ENCODE measurements at regions of chr7 and their contacts with region 1.

Region 1: DNA sequence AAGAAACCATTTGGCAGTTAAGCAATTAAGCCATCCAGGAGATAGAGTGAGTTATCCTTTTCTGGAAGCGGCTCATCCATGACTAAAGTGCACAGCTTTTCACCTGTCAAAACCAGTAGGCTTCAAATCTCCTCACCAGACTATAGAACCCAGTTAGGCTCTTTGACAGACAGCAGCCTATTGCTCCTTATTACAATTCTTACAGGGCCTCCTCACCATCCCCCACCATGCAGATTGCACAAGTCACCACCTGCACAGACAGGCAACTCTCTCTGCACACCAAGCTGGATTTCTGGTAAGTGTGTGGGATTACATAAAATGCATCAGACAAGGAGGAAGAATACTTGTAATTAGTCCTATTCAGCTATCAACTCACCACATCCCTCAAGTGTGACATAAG is 301.6 kb downstream of the SNX13 start:
- DNase-seq: peak; percentile 78
- H3K4me3 ChIP-seq: no peak overlapping the region
- H3K27ac ChIP-seq: no peak overlapping the region
- H3K4me1 ChIP-seq: peaks cover 11% of the 10 kb centered on the region
- H3K27me3 ChIP-seq: no peaks in the 10 kb centered on the region
- CTCF ChIP-seq: no peak

Region 2: GRCh38 chr7:17304926-17305325 is 333.8 kb before region 1 on chr7:
- CTCF ChIA-PET with region 1: interaction called, 5 read pairs
- dilution Hi-C with region 1: no loop called
- in situ Hi-C with region 1: loop called in 1 of 2 experiments (anchors 10 kb)
- intact Hi-C with region 1: loop called (anchors 2 kb)
- DNase-seq: peak; percentile 91
- H3K4me3 ChIP-seq: peak overlapping the region; percentile 15 to 71 (median 36)
- H3K27ac ChIP-seq: peak overlapping the region; percentile 77
- H3K4me1 ChIP-seq: peaks cover 42% of the 10 kb centered on the region
- H3K27me3 ChIP-seq: no peaks in the 10 kb centered on the region
- CTCF ChIP-seq: no peak

Region 3: DNA sequence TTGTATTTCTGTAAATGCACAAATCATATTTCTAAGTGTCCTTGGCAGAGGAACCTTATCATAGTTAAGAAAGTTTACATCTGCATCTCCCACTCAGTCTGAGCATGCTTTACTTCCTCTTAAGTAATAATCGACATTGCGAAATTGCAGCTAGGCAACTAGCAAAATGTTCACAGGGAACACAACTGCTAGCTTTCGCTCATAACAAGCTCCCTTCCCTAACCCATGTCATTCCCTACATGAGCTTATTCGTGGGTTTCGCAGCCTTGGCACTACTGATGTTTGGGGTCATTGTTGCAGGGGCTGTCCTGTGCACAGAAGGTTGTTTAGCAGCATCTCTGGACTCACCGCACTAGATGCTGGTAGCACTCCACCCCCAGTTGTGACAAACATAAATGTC is 268.6 kb before region 1 on chr7:
- CTCF ChIA-PET with region 1: no interaction called
- dilution Hi-C with region 1: no loop called
- in situ Hi-C with region 1: no loop called
- intact Hi-C with region 1: loop called (anchors 2 kb)
- DNase-seq: peak; percentile 86
- H3K4me3 ChIP-seq: no peak overlapping the region
- H3K27ac ChIP-seq: peak overlapping the region; percentile 97
- H3K4me1 ChIP-seq: peaks cover 46% of the 10 kb centered on the region
- H3K27me3 ChIP-seq: no peaks in the 10 kb centered on the region
- CTCF ChIP-seq: no peak

Region 4: GRCh38 chr7:17560516-17560915 is 78.2 kb before region 1 on chr7:
- CTCF ChIA-PET with region 1: no interaction called
- dilution Hi-C with region 1: no loop called
- in situ Hi-C with region 1: no loop called
- intact Hi-C with region 1: loop called (anchors 2 kb)
- DNase-seq: peak; percentile 83
- H3K4me3 ChIP-seq: no peak overlapping the region
- H3K27ac ChIP-seq: peak overlapping the region; percentile 82
- H3K4me1 ChIP-seq: peaks cover 35% of the 10 kb centered on the region
- H3K27me3 ChIP-seq: no peaks in the 10 kb centered on the region
- CTCF ChIP-seq: no peak

Measured in mammary epithelial cell (primary cell).